CD4-positive, alpha-beta T cell (primary cell): ENCODE measurements at regions of chr19 and their contacts with region 1.

Region 1: DNA sequence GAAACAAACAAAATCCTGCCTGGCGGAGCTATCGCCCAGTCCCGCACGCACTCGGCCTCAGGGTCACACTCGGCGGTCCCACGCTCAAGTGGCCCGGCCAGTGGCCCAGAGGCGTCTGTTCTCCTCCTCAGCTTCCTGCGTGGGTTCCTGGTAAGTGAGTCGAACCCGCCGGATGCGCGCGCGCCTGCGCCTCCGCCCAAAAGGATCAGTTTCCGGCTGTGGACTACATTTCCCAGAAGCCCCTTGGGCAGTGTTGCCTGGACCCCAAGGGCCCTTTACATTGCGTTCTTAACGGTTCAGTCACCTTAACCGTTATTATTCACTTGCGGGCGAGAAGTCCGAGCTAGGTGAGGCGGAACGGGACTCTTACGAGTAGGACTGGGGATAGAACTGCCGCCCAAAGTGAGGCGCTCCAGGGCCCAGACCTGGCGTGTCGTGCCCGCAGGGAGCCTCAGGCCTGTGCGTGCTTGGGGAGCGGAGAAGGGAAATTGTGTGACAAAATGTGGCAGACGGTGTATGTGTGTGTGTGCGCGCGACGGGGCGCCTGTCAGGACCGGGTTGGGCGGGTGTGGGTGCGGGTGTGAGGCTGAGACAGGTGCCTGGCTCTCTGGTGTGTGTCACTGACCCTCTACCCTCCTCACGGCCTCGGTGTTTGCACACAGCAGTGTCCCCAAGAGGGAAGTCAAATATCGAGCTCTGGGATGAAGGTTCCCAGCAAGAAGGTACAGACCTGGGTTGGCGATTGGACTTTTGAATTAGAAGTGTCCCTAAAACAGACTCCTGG is at the start of gene ZNF546:
- DNase-seq: peak; percentile 81 to 96 (median 86)
- ATAC-seq: peak; percentile 92
- H3K4me3 ChIP-seq: peak within 1 kb of the TSS; percentile 71
- H3K4me3 Mint-ChIP-seq: peak within 1 kb of the TSS; percentile 96
- H3K27ac ChIP-seq: peak within 1 kb of the TSS; percentile 84 to 85
- H3K27ac Mint-ChIP-seq: peak within 1 kb of the TSS; percentile 84
- H3K4me1 ChIP-seq: peaks cover 24% of the 10 kb centered on the region
- H3K4me1 Mint-ChIP-seq: peaks cover 52% of the 10 kb centered on the region
- H3K27me3 ChIP-seq: no peaks in the 10 kb centered on the region
- H3K27me3 Mint-ChIP-seq: no peaks in the 10 kb centered on the region
- CTCF ChIP-seq: no peak
- total RNA-seq, gene ZNF546: 2.4 to 3.8 TPM

Region 2: GRCh38 chr19:39824143-39825092 is 172.6 kb before region 1 on chr19:
- CTCF ChIA-PET with region 1: no interaction called
- POLR2A ChIA-PET with region 1: no interaction called
- intact Hi-C with region 1: loop called in 1 of 2 experiments (anchors 5 kb)
- DNase-seq: peak; percentile 75 to 94 (median 82)
- ATAC-seq: peak; percentile 99
- H3K4me3 ChIP-seq: peak overlapping the region; percentile 94
- H3K4me3 Mint-ChIP-seq: no peak overlapping the region
- H3K27ac ChIP-seq: peak overlapping the region; percentile 29 to 55
- H3K27ac Mint-ChIP-seq: no peak overlapping the region
- H3K4me1 ChIP-seq: peaks cover 40% of the 10 kb centered on the region
- H3K4me1 Mint-ChIP-seq: no peaks in the 10 kb centered on the region
- H3K27me3 ChIP-seq: no peaks in the 10 kb centered on the region
- H3K27me3 Mint-ChIP-seq: no peaks in the 10 kb centered on the region
- CTCF ChIP-seq: no peak

Region 3: DNA sequence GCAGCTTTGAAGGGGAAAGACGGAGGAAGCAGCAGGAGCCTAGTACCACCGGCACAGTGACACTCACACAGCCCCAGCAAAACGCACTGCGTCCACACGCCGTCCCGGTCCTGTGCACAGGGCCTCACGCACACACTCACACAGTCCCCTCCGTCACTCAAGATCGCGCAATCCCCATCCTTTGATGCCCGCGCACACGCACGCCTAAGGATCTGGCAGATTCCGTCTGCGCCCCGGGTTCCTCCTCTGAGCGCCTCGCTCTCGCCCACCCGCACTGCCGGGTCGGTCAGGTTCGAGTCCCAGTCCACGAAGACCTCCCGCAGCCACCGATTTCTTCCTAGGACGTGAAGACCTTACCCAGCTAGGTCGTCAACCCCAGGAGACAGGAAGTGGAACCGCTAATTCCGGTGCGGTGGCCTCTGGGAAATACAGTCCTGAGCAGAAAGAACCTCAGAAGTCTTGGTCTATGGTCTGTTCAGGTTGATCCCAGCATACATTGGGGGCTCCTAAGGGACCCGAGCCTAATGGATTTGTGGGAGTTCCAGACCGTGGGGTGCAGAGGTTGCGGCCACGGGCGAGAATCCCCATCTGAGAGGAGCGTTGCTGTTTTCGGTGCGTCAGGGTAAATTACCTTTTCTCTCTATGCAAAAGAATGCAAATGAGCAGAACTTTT is 59.0 kb after region 1 on chr19 and contains the start of gene ZNF780B:
- CTCF ChIA-PET with region 1: no interaction called
- POLR2A ChIA-PET with region 1: interaction called, 4 read pairs
- intact Hi-C with region 1: loop called (anchors 5 to 10 kb)
- DNase-seq: peak; percentile 47 to 80 (median 57)
- ATAC-seq: peak; percentile 91
- H3K4me3 ChIP-seq: peak within 1 kb of the TSS; percentile 92
- H3K4me3 Mint-ChIP-seq: peak within 1 kb of the TSS; percentile 100
- H3K27ac ChIP-seq: peak within 1 kb of the TSS; percentile 64 to 75
- H3K27ac Mint-ChIP-seq: peak within 1 kb of the TSS; percentile 96
- H3K4me1 ChIP-seq: peaks cover 18% of the 10 kb centered on the region
- H3K4me1 Mint-ChIP-seq: peaks cover 57% of the 10 kb centered on the region
- H3K27me3 ChIP-seq: no peaks in the 10 kb centered on the region
- H3K27me3 Mint-ChIP-seq: no peaks in the 10 kb centered on the region
- CTCF ChIP-seq: no peak
- total RNA-seq, gene ZNF780B: 11.8 to 12.0 TPM

Region 4: DNA sequence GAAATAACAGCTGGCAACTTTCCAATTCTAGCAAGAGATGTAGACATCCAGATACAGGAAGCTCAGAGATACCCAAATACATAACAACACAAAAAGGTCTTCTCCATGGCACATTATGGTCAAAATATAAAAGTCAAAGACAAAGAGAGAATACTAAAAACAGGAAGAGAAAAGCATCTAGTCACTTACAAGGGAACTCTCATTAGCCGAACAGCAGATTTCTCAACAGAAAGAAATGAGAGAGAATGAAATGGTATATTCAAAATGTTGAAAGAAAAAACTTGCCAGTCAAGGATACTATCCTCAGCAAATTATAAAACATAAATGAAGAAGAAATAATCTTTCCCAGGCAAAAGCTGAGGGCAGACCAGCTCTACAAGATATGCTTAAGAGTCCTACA is 81.4 kb after region 1 on chr19:
- CTCF ChIA-PET with region 1: no interaction called
- POLR2A ChIA-PET with region 1: no interaction called
- intact Hi-C with region 1: no loop called
- DNase-seq: no peak
- ATAC-seq: no peak
- H3K4me3 ChIP-seq: no peak overlapping the region
- H3K4me3 Mint-ChIP-seq: no peak overlapping the region
- H3K27ac ChIP-seq: no peak overlapping the region
- H3K27ac Mint-ChIP-seq: no peak overlapping the region
- H3K4me1 ChIP-seq: no peaks in the 10 kb centered on the region
- H3K4me1 Mint-ChIP-seq: peaks cover 4% of the 10 kb centered on the region
- H3K27me3 ChIP-seq: no peaks in the 10 kb centered on the region
- H3K27me3 Mint-ChIP-seq: no peaks in the 10 kb centered on the region
- CTCF ChIP-seq: no peak

Region 5: GRCh38 chr19:40090241-40091204 is 93.5 kb after region 1 on chr19 and contains the start of gene ZNF780A:
- CTCF ChIA-PET with region 1: interaction called, 3 read pairs
- POLR2A ChIA-PET with region 1: interaction called, 12 read pairs
- intact Hi-C with region 1: loop called in 1 of 2 experiments (anchors 5 kb)
- DNase-seq: peak; percentile 61 to 86 (median 72)
- ATAC-seq: peak; percentile 96
- H3K4me3 ChIP-seq: peak within 1 kb of the TSS; percentile 81
- H3K4me3 Mint-ChIP-seq: peak within 1 kb of the TSS; percentile 100
- H3K27ac ChIP-seq: peak within 1 kb of the TSS; percentile 89 to 91
- H3K27ac Mint-ChIP-seq: peak within 1 kb of the TSS; percentile 99
- H3K4me1 ChIP-seq: peaks cover 6% of the 10 kb centered on the region
- H3K4me1 Mint-ChIP-seq: peaks cover 47% of the 10 kb centered on the region
- H3K27me3 ChIP-seq: peaks cover 5 to 7% of the 10 kb centered on the region in 2 experiments
- H3K27me3 Mint-ChIP-seq: peaks cover 10% of the 10 kb centered on the region
- CTCF ChIP-seq: no peak
- total RNA-seq, gene ZNF780A: 9.7 to 10.6 TPM